MCF 10A (cell line): ENCODE measurements at regions of chr14 and their contacts with region 1.

Region 1: DNA sequence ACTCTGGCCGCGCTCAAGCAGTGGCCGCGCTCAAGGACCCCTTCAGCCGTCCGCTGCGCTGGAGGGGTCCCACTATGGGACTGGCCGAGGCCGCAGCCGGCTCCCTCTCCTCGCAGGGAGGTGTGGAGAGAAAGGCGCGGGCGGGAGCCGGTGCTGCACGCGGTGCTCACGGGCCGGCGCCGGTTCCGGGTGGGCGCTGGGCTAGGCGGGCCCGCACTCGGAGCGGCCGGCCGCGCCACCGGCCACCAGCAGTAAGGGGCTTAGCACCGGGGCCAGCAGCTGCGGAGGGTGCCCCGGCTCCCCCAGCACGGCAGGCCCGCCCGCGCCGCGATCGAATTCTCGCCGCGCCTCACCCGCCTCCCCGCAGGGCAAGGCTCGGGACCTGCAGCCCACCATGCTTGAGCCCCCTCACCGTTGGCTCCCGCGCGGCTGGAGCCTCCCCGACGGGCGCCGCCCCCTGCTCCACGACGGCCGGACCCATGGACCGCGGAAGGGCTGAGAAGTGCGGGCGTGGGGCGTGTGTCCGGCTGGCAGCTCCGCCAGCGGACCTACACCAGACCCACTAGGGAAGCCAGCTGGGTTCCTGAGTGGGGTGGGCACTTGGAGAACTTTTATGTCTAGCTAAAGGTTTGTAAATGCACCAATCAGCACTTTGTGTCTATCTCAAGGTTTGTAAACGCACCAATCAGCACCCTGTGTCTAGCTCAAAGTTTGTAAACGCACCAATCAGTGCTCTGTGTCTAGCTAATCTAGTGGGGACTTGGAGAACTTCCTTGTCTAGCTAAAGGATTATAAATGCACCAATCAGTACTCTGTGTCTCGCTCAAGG is 49.5 kb downstream of the KLHL28 start:
- DNase-seq: no peak
- H3K4me3 Mint-ChIP-seq: no peak overlapping the region
- H3K27ac Mint-ChIP-seq: no peak overlapping the region
- H3K4me1 Mint-ChIP-seq: no peaks in the 10 kb centered on the region
- H3K27me3 Mint-ChIP-seq: no peaks in the 10 kb centered on the region
- CTCF ChIP-seq: no peak

Region 2: DNA sequence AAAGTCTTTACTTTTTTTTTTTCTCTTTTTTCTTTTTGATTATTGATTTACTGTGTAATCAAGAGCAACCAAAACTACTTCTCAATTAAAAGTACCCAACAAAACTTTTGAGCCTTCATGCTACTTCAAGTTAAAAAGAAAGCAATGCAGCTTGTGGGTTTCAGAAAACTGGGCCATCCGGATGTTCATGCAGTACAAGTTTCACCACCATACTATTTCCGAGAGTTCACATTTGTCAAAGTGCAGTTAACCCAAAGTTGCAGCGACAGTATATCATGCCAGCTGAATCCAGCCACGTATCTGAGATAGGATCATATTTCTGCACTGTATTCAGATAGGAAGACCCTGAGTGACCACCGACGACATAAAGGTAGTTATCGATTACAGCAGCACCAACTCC is 16.5 kb after region 1 on chr14:
- CTCF ChIA-PET with region 1: interaction called, 11 read pairs
- POLR2A ChIA-PET with region 1: interaction called, 5 read pairs
- intact Hi-C with region 1: no loop called
- DNase-seq: no peak
- H3K4me3 Mint-ChIP-seq: no peak overlapping the region
- H3K27ac Mint-ChIP-seq: no peak overlapping the region
- H3K4me1 Mint-ChIP-seq: no peaks in the 10 kb centered on the region
- H3K27me3 Mint-ChIP-seq: no peaks in the 10 kb centered on the region
- CTCF ChIP-seq: no peak

Region 3: DNA sequence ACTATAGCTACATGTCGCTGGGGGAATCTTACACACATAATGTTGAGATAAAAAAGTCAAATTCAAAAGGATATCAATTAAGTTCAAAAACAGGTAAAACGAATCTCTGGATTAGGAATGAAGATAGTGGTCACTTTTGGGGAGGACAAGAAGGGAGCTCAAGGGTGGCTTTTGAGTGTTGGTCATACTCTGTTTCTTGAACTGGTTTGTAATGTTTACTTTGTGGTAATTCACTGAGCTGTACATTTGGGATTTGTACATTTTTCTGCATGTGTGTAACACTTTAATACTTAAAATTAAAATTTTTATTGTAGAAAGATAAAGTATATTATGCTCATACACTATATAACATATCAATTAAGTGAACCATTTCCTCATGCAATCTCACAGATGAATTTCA is 22.9 kb after region 1 on chr14:
- CTCF ChIA-PET with region 1: interaction called, 11 read pairs
- POLR2A ChIA-PET with region 1: interaction called, 5 read pairs
- intact Hi-C with region 1: no loop called
- DNase-seq: no peak
- H3K4me3 Mint-ChIP-seq: no peak overlapping the region
- H3K27ac Mint-ChIP-seq: no peak overlapping the region
- H3K4me1 Mint-ChIP-seq: no peaks in the 10 kb centered on the region
- H3K27me3 Mint-ChIP-seq: no peaks in the 10 kb centered on the region
- CTCF ChIP-seq: no peak

Region 4: DNA sequence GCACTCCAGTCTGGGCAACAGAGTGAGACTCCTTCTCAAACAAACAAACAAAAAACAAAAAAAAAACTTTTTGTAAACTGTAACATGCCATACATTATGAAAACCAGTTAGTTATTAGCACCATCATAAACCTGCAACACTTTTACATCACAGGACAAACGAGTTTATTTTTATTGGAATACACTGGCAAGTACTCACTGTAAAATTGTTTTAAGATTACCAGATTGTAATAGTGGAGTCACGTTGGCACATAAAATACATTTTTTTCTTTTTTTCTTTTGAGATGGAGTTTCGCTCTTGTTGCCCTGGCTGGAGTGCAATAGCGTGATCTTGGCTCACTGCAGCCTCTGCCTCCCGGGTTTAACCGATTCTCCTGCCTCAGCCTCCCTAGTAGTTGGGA is 206.3 kb after region 1 on chr14:
- CTCF ChIA-PET with region 1: interaction called, 13 read pairs
- POLR2A ChIA-PET with region 1: no interaction called
- intact Hi-C with region 1: no loop called
- DNase-seq: no peak
- H3K4me3 Mint-ChIP-seq: no peak overlapping the region
- H3K27ac Mint-ChIP-seq: no peak overlapping the region
- H3K4me1 Mint-ChIP-seq: no peaks in the 10 kb centered on the region
- H3K27me3 Mint-ChIP-seq: no peaks in the 10 kb centered on the region
- CTCF ChIP-seq: no peak

Region 5: DNA sequence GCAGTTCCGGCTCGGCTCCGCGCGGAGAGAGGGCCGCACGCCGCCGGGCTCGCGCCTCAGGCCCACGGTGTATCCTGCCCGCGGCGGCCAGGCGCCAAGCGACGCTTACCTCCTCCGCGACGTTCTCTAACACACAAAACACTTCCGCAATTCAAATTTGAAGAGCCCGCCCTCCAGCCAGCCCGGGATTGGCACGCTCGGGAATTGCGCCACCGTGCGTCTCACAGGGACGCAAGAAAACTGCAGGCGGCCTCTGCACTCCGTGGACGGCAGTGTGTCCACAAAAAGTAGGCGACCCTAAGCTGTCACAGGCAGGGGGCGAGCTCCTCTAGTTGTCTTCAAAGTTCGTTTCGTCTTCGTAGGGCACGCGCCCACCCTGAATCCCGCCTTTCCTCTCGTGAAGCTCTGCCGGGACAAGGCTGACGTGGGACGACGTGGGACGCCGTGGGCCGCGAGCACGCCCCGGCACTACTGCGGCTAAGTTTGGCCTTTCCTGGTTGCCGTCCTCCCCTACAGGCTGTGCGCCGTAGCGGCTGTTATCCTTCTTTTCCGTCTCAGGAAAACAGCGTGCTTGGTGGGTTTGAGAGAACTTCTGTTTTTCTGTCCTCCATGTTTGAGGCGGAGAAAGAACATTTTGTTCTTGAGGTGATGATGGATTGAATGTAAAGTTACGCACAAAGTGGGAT is 341.0 kb after region 1 on chr14 and contains the start of gene MIS18BP1:
- CTCF ChIA-PET with region 1: interaction called, 8 read pairs
- POLR2A ChIA-PET with region 1: interaction called, 4 read pairs
- intact Hi-C with region 1: loop called (anchors 5 kb)
- DNase-seq: peak; percentile 97
- H3K4me3 Mint-ChIP-seq: peak within 1 kb of the TSS; percentile 88
- H3K27ac Mint-ChIP-seq: peak within 1 kb of the TSS; percentile 99
- H3K4me1 Mint-ChIP-seq: peaks cover 11% of the 10 kb centered on the region
- H3K27me3 Mint-ChIP-seq: no peaks in the 10 kb centered on the region
- CTCF ChIP-seq: peak; percentile 80
- total RNA-seq, gene MIS18BP1: 24.2 and 31.6 TPM in 2 replicates

Region 6: DNA sequence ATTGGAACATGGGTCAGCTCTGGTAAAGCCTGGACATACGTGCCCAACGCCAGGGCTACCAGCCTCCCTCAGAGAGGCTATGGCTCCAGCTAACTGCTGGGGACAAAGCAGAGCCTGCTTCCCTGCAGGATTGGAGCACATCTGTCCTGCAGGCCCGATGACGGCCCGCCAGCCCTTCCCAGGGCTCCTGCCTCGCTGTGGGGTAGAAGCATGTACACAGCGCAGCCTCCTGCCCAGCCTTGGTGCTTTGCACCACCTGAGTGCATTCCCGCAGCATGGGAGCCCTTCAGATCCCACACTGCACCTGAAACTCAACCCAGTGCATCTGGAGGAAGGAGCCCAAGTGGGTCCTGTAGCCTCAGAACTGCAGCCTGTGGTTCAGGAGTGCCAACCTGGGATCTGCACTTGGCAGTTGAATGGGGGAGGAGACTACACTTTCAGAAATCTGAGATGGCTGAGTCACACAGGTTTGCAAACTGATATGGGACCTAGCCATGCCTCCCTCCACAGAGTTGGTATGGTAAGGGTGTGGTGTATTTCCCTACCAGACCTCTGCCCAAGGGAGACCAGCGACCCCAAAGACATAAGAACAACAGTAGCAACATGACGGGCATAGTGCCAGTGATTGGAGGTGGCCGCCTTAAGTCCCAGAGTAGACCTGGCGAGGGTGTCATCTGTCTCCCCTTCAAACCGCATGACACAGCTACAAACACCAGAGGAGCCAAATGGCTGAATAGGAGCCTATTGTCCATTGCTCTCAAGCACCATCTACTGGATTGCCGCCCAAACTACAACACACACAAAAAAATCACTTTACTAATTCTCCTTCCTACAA is 614.7 kb after region 1 on chr14:
- CTCF ChIA-PET with region 1: interaction called, 4 read pairs
- POLR2A ChIA-PET with region 1: no interaction called
- intact Hi-C with region 1: loop called (anchors 5 kb)
- DNase-seq: peak; percentile 76
- H3K4me3 Mint-ChIP-seq: no peak overlapping the region
- H3K27ac Mint-ChIP-seq: no peak overlapping the region
- H3K4me1 Mint-ChIP-seq: no peaks in the 10 kb centered on the region
- H3K27me3 Mint-ChIP-seq: no peaks in the 10 kb centered on the region
- CTCF ChIP-seq: peak; percentile 75